ENCODE measurements at regions of chr12 and their contacts with region 1.

Region 1: DNA sequence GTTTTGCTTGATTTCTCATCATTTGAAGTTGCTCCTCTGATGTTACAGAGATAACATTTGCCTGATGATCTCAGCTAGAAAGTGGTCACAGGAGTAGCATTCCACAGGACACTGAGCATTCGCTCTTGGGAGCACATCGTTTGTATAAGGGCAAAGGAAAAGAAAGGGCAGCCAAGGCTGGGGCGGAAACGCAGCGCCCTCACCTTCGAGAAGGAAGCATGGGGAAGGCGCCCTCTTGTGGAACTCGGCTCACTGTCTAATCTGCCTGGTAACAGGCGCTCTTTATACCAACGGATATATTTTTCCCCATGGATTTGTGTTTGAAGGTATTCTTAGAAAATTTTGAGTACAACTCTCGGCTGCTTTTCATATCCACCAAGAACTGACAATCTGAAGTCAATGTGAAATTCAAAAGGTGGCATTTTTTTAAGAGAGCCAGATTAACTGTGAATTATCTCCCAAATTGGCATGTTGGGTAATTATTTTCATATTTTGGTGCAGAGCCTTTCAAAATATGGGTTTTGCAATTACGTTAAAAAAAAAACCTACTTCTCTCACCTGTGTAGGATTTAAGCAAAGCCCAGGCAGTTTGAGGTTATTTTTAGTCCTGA is 172.7 kb downstream of the CAND1 start:
- DNase-seq: peak; percentile 84
- ATAC-seq: peak; percentile 98
- H3K4me3 Mint-ChIP-seq: no peak overlapping the region
- H3K27ac Mint-ChIP-seq: 0 out of 2 replicates have a peak overlapping the region, but pooled peaks have one; percentile 64
- H3K4me1 Mint-ChIP-seq: peaks cover 22% of the 10 kb centered on the region
- H3K27me3 Mint-ChIP-seq: no peaks in the 10 kb centered on the region; the same call in 1 of the 2 replicates
- CTCF ChIP-seq: peak; percentile 63

Region 2: GRCh38 chr12:67299926-67300325 is 141.9 kb before region 1 on chr12:
- CTCF ChIA-PET with region 1: no interaction called
- POLR2A ChIA-PET with region 1: no interaction called
- DNase-seq: no peak
- ATAC-seq: no peak
- H3K4me3 Mint-ChIP-seq: no peak overlapping the region
- H3K27ac Mint-ChIP-seq: no peak overlapping the region
- H3K4me1 Mint-ChIP-seq: no peaks in the 10 kb centered on the region
- H3K27me3 Mint-ChIP-seq: no peaks in the 10 kb centered on the region
- CTCF ChIP-seq: no peak

Region 3: DNA sequence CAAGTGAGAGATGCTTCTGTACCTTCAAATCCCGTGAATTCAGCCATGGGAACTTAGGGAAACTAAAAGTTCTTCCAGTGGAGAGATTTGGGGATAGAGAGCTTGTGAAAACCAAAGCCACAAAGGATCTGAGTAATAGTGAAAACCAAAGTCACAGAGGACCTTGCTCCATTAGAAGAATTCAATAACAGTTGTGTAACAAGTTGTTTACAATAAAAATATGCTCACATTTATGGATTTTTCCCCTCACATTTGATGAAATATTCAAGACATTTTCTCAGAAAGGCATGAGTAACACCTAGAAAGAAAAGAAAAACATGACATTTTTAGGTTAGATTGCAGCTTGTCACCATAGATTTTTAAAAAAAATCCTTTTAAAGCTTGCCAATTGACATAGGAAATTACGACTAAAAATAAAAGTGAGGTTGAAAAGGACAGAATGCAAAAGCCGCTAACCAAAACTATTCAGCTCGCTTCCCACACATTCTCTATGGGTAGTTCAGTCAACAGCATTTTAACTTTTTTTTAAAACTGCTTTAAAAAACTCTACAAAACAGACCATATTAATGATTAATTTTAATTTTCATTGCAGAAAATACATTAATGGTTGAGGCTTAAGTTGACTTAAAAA is 59.5 kb before region 1 on chr12:
- CTCF ChIA-PET with region 1: no interaction called
- POLR2A ChIA-PET with region 1: no interaction called
- DNase-seq: no peak
- ATAC-seq: no peak
- H3K4me3 Mint-ChIP-seq: no peak overlapping the region
- H3K27ac Mint-ChIP-seq: no peak overlapping the region
- H3K4me1 Mint-ChIP-seq: no peaks in the 10 kb centered on the region
- H3K27me3 Mint-ChIP-seq: peaks cover 3% of the 10 kb centered on the region; the same call in 1 of the 2 replicates
- CTCF ChIP-seq: no peak

Region 4: GRCh38 chr12:67430708-67431335 is 11.0 kb before region 1 on chr12:
- CTCF ChIA-PET with region 1: interaction called, 11 read pairs
- POLR2A ChIA-PET with region 1: no interaction called
- DNase-seq: peak; percentile 20
- ATAC-seq: peak; percentile 67
- H3K4me3 Mint-ChIP-seq: no peak overlapping the region
- H3K27ac Mint-ChIP-seq: no peak overlapping the region
- H3K4me1 Mint-ChIP-seq: peaks cover 19% of the 10 kb centered on the region
- H3K27me3 Mint-ChIP-seq: no peaks in the 10 kb centered on the region
- CTCF ChIP-seq: no peak

Region 5: GRCh38 chr12:67457778-67458177 is 15.9 kb after region 1 on chr12:
- CTCF ChIA-PET with region 1: no interaction called
- POLR2A ChIA-PET with region 1: no interaction called
- DNase-seq: no peak
- ATAC-seq: peak; percentile 24; the same call in 1 of the 2 replicates
- H3K4me3 Mint-ChIP-seq: no peak overlapping the region
- H3K27ac Mint-ChIP-seq: no peak overlapping the region
- H3K4me1 Mint-ChIP-seq: peaks cover 9% of the 10 kb centered on the region; the same call in 1 of the 2 replicates
- H3K27me3 Mint-ChIP-seq: no peaks in the 10 kb centered on the region; the same call in 1 of the 2 replicates
- CTCF ChIP-seq: no peak

Measured in WTC11 (cell line).